ENCODE measurements at regions of chr6 and their contacts with region 1.

Region 1: GRCh38 chr6:106223300-106223930 is 102.1 kb downstream of the ATG5 start:
- DNase-seq: peak; percentile 79
- H3K4me3 Mint-ChIP-seq: no peak overlapping the region
- H3K27ac Mint-ChIP-seq: no peak overlapping the region
- H3K4me1 Mint-ChIP-seq: peaks cover 43% of the 10 kb centered on the region
- H3K27me3 Mint-ChIP-seq: no peaks in the 10 kb centered on the region

Region 2: DNA sequence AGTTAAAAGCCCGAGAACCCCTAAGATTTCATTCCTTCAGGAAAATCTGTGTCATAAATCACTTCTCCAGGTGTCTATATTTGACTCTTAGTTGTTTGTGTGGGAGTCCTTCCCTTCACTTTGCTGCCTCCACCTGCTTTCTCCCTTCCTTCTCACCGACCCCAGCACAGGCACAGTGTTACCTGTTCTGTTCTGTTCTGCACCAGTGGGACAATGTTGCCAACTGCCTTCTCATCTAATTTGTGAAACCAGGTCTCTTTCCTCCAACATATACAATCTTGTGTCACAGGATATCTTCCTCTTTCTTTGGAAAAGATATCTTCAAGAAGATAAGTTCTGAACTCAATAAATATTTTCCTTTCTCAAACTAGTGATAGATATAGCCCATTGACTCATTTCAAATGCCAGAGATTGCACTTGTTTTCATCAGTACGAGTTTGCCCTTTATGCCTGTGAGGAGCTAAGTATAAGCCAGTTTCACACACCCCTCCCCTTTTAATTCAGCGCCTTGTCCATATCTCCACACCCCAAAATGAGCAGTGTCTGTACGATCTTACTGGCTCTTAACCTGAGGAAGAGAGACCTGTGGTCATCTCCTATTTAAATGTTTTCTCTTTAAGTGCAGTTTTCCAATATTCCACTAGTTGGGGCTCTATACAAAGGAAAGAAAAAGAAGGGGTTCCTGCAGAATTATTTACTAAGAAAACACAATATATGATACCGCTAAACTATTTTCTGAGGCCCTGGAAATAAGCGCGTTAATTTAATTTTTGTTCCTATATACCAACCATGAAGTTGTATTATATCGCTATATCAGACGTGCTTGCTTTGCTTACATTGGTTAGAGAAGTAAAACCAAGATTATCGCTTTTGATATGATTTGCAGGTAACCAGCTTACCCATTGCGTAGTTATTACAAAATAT is 738.9 kb before region 1 on chr6:
- CTCF ChIA-PET with region 1: interaction called, 33 read pairs
- POLR2A ChIA-PET with region 1: interaction called, 5 read pairs
- DNase-seq: peak; percentile 23
- H3K4me3 Mint-ChIP-seq: peak overlapping the region; percentile 9
- H3K27ac Mint-ChIP-seq: peak overlapping the region; percentile 66
- H3K4me1 Mint-ChIP-seq: peaks cover 76% of the 10 kb centered on the region
- H3K27me3 Mint-ChIP-seq: no peaks in the 10 kb centered on the region

Region 3: GRCh38 chr6:105992315-105992961 is 231.0 kb before region 1 on chr6:
- CTCF ChIA-PET with region 1: interaction called, 24 read pairs
- POLR2A ChIA-PET with region 1: interaction called, 6 read pairs
- DNase-seq: peak; percentile 92
- H3K4me3 Mint-ChIP-seq: peak overlapping the region; percentile 87
- H3K27ac Mint-ChIP-seq: peak overlapping the region; percentile 74
- H3K4me1 Mint-ChIP-seq: peaks cover 70% of the 10 kb centered on the region
- H3K27me3 Mint-ChIP-seq: peaks cover 5% of the 10 kb centered on the region

Region 4: DNA sequence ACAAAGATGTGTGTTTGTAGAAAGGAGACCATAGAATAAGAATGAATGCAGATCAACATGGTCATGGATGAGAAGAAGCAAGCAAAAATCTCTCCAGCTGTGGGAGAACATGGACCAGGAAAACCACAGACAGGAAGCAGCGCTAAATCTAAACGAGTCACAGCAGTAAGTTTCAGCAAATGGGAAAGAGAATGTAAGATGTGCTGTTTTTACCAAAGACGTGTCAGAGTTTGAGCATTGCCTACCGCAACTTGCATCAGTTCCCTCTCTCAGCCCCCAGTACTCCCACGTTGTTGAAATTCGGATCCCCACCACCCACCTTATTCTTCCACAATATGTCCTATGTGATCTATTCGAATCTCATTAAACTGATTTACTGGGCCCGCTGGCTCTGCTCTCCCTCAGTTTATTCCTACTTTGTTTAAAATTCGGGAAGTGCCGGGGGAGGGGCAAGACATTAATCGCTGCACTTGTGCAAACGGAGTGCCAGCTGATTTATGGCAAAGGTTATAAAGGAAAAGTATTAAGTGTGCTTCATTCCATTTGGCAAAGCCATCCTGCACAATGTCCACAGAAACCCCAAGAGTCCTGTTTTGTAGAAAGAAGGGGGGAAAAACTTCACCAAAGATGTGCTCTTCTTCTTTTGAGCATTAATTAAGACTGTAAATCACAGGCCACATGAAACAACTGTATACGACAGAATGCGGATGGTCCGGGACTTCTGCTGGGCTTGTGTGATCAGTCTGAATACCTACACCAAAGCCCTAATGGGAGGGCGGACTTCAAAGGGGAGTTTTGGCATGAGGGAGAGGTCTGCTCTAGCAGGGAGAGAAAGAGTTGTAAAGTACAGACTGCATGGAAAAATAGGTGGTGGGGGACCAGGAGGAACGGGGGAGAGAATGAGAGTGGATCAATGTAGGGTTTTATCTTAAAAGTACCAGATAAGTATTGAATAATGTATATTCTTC is 196.4 kb before region 1 on chr6:
- CTCF ChIA-PET with region 1: no interaction called
- POLR2A ChIA-PET with region 1: no interaction called
- DNase-seq: no peak
- H3K4me3 Mint-ChIP-seq: no peak overlapping the region
- H3K27ac Mint-ChIP-seq: no peak overlapping the region
- H3K4me1 Mint-ChIP-seq: peaks cover 9% of the 10 kb centered on the region
- H3K27me3 Mint-ChIP-seq: no peaks in the 10 kb centered on the region

Region 5: GRCh38 chr6:106069478-106069877 is 153.9 kb before region 1 on chr6:
- CTCF ChIA-PET with region 1: no interaction called
- POLR2A ChIA-PET with region 1: no interaction called
- DNase-seq: no peak
- H3K4me3 Mint-ChIP-seq: no peak overlapping the region
- H3K27ac Mint-ChIP-seq: no peak overlapping the region
- H3K4me1 Mint-ChIP-seq: peaks cover 6% of the 10 kb centered on the region
- H3K27me3 Mint-ChIP-seq: no peaks in the 10 kb centered on the region

Region 6: DNA sequence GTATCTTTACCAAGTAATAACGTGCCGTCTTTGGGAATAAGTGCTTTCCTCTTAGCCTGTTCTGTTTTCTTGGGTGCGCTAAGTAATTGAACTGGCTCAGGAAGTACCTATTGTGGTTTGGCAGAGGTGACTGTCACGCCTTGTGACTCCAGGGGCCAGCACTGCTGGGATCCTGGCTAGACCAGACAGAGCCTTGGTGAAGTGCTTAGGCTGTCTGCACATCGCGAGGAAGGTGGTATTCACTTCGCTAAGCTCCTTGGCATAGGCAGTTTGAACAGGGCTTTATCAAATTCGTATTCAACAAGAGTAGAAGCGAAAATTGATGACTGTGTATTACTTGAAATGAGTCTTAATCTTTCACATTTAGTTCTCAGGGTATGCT is 119.7 kb before region 1 on chr6:
- CTCF ChIA-PET with region 1: interaction called, 13 read pairs
- POLR2A ChIA-PET with region 1: interaction called, 31 read pairs
- DNase-seq: peak; percentile 63
- H3K4me3 Mint-ChIP-seq: peak overlapping the region; percentile 87
- H3K27ac Mint-ChIP-seq: peak overlapping the region; percentile 97
- H3K4me1 Mint-ChIP-seq: peaks cover 76% of the 10 kb centered on the region
- H3K27me3 Mint-ChIP-seq: no peaks in the 10 kb centered on the region

Region 7: GRCh38 chr6:106141441-106142237 is 81.8 kb before region 1 on chr6:
- CTCF ChIA-PET with region 1: interaction called, 13 read pairs
- POLR2A ChIA-PET with region 1: interaction called, 5 read pairs
- DNase-seq: peak; percentile 67
- H3K4me3 Mint-ChIP-seq: peak overlapping the region; percentile 33
- H3K27ac Mint-ChIP-seq: peak overlapping the region; percentile 96
- H3K4me1 Mint-ChIP-seq: peaks cover 63% of the 10 kb centered on the region
- H3K27me3 Mint-ChIP-seq: no peaks in the 10 kb centered on the region

Region 8: DNA sequence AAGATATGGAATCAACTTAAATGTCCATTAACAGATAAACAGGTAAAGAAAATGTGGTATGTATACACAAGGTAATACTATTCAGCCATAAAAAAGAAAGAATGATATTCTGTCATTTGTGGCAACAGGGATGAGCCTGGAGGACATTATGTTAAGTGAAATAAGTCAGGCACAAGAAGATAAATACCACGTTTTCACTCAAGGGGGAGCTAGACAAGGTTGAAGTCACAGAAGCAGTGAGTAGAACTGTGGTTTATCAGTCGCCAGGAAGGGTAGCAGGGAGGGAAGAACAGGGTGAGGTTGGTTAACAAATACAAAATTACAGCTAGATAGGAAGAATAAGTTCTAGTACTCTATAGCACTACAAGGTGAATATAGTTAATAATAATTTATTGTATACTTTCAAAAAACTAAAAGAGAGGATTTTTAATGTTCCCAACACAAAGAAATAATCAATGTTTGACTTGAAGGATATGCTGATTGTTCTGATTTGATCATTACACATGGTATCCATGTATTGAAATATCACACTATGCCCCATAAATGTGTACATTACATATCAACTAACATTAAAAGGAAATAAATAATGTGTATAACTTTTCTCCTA is 384.8 kb after region 1 on chr6:
- CTCF ChIA-PET with region 1: no interaction called
- POLR2A ChIA-PET with region 1: no interaction called
- DNase-seq: no peak
- H3K4me3 Mint-ChIP-seq: no peak overlapping the region
- H3K27ac Mint-ChIP-seq: no peak overlapping the region
- H3K4me1 Mint-ChIP-seq: peaks cover 15% of the 10 kb centered on the region
- H3K27me3 Mint-ChIP-seq: no peaks in the 10 kb centered on the region